ENCODE measurements at regions of chr9 and their contacts with region 1.

Region 1: GRCh38 chr9:14868772-14869583 is 41.2 kb downstream of the FREM1 start:
- DNase-seq: peak; percentile 97
- ATAC-seq: peak; percentile 95
- H3K4me3 ChIP-seq: peak overlapping the region; percentile 76 to 97 (median 88)
- H3K27ac ChIP-seq: peak overlapping the region; percentile 98
- H3K4me1 ChIP-seq: peaks cover 28% of the 10 kb centered on the region
- H3K27me3 ChIP-seq: no peaks in the 10 kb centered on the region; a peak in 3 of 5 replicates
- CTCF ChIP-seq: no peak
- EP300 ChIP-seq: peak; percentile 70 to 88; a peak in 3 of 4 replicates
- POLR2A ChIP-seq: peak; percentile 60 to 76
- RAD21 ChIP-seq: no peak

Region 2: GRCh38 chr9:14806941-14807520 is 61.9 kb before region 1 on chr9:
- CTCF ChIA-PET with region 1: no interaction called
- POLR2A ChIA-PET with region 1: no interaction called
- in situ Hi-C with region 1: no loop called
- intact Hi-C with region 1: loop called (anchors 10 kb)
- DNase-seq: no peak
- ATAC-seq: no peak
- H3K4me3 ChIP-seq: no peak overlapping the region
- H3K27ac ChIP-seq: no peak overlapping the region
- H3K4me1 ChIP-seq: no peaks in the 10 kb centered on the region
- H3K27me3 ChIP-seq: no peaks in the 10 kb centered on the region
- CTCF ChIP-seq: no peak
- EP300 ChIP-seq: no peak
- POLR2A ChIP-seq: no peak
- RAD21 ChIP-seq: no peak

Region 3: GRCh38 chr9:14909961-14910805 is 41.2 kb after region 1 on chr9 and contains the start of gene FREM1:
- CTCF ChIA-PET with region 1: no interaction called
- POLR2A ChIA-PET with region 1: interaction called, 8 read pairs
- in situ Hi-C with region 1: no loop called
- intact Hi-C with region 1: loop called (anchors 1 kb)
- DNase-seq: peak; percentile 55
- ATAC-seq: peak; percentile 94
- H3K4me3 ChIP-seq: peak within 1 kb of the TSS; percentile 1 to 66 (median 63); a peak in 4 of 6 replicates
- H3K27ac ChIP-seq: peak within 1 kb of the TSS; percentile 61
- H3K4me1 ChIP-seq: peaks cover 84% of the 10 kb centered on the region
- H3K27me3 ChIP-seq: no peaks in the 10 kb centered on the region; a peak in 1 of 5 replicates
- CTCF ChIP-seq: 0 out of 2 replicates have a peak, but pooled peaks have one; percentile 23
- EP300 ChIP-seq: peak in 1 of 2 experiments; percentile 18; a peak in 1 of 4 replicates
- POLR2A ChIP-seq: no peak
- RAD21 ChIP-seq: no peak
- total RNA-seq, gene FREM1: 33.6 and 64.3 TPM in 2 replicates

Region 4: GRCh38 chr9:14961372-14962068 is 92.5 kb after region 1 on chr9:
- CTCF ChIA-PET with region 1: no interaction called
- POLR2A ChIA-PET with region 1: interaction called, 12 read pairs
- in situ Hi-C with region 1: loop called (anchors 5 kb)
- intact Hi-C with region 1: loop called (anchors 1 kb)
- DNase-seq: peak; percentile 99
- ATAC-seq: peak; percentile 100
- H3K4me3 ChIP-seq: peak overlapping the region; percentile 58 to 76 (median 72)
- H3K27ac ChIP-seq: peak overlapping the region; percentile 100
- H3K4me1 ChIP-seq: peaks cover 40% of the 10 kb centered on the region
- H3K27me3 ChIP-seq: no peaks in the 10 kb centered on the region; a peak in 1 of 5 replicates
- CTCF ChIP-seq: peak; percentile 50
- EP300 ChIP-seq: no peak; a peak in 1 of 4 replicates
- POLR2A ChIP-seq: peak; percentile 86 to 89
- RAD21 ChIP-seq: no peak; the same call in 1 of the 2 replicates

Region 5: DNA sequence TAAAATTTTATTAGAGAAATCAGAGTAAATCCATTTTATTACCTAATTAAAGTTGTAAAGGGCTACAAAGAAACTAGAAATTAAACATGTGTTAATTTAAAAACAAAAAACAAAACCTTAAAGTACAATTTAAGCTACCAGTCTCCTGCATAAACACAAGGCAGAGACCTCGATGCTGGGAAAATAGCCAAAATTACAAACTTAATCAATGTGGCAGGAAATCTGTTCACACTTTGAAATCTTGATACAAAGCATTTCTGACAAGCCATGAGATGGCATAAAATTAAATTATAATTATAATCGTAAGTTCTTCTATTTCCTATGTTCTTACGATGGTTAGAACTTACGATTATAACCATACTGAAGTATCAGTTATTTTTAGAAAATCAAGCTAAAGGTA is 199.3 kb after region 1 on chr9:
- CTCF ChIA-PET with region 1: no interaction called
- POLR2A ChIA-PET with region 1: no interaction called
- in situ Hi-C with region 1: no loop called
- intact Hi-C with region 1: no loop called
- DNase-seq: no peak
- ATAC-seq: no peak
- H3K4me3 ChIP-seq: no peak overlapping the region
- H3K27ac ChIP-seq: no peak overlapping the region
- H3K4me1 ChIP-seq: peaks cover 10% of the 10 kb centered on the region
- H3K27me3 ChIP-seq: peaks cover 0 to 5% of the 10 kb centered on the region in 2 experiments; a peak in 2 of 5 replicates
- CTCF ChIP-seq: no peak
- EP300 ChIP-seq: no peak
- POLR2A ChIP-seq: no peak
- RAD21 ChIP-seq: no peak

Region 6: DNA sequence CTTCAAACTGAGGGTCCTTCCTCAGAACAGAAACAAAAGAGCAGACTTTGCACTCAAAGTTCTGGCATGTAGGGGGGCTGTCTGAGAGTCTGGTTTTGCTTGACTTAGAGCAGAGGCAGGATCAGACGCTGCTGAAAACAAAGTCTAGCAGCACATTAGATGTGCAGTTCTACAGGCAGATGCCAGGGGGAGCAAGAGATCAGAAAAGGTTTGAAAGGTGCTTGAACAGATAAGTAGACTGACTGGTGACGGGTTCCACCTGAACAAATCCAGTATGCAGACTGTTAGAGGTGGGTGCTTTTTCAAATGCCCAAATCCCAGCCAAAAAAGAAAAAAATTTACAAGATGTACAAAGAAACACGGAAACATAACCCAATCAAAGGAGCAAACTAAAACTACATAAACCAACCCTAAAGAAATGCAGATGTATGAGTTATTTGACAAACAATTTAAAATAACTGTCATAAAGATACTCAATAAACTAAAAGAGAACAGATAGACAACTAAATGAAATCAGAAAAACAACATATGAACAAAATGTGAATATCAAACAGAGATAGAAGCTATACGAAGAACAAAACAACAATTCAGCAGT is 235.9 kb after region 1 on chr9:
- CTCF ChIA-PET with region 1: no interaction called
- POLR2A ChIA-PET with region 1: no interaction called
- in situ Hi-C with region 1: no loop called
- intact Hi-C with region 1: loop called (anchors 10 kb)
- DNase-seq: peak; percentile 47
- ATAC-seq: peak; percentile 81
- H3K4me3 ChIP-seq: no peak overlapping the region
- H3K27ac ChIP-seq: no peak overlapping the region
- H3K4me1 ChIP-seq: peaks cover 13% of the 10 kb centered on the region
- H3K27me3 ChIP-seq: no peaks in the 10 kb centered on the region
- CTCF ChIP-seq: peak; percentile 81
- EP300 ChIP-seq: no peak
- POLR2A ChIP-seq: no peak
- RAD21 ChIP-seq: no peak; the same call in 1 of the 2 replicates

Region 7: DNA sequence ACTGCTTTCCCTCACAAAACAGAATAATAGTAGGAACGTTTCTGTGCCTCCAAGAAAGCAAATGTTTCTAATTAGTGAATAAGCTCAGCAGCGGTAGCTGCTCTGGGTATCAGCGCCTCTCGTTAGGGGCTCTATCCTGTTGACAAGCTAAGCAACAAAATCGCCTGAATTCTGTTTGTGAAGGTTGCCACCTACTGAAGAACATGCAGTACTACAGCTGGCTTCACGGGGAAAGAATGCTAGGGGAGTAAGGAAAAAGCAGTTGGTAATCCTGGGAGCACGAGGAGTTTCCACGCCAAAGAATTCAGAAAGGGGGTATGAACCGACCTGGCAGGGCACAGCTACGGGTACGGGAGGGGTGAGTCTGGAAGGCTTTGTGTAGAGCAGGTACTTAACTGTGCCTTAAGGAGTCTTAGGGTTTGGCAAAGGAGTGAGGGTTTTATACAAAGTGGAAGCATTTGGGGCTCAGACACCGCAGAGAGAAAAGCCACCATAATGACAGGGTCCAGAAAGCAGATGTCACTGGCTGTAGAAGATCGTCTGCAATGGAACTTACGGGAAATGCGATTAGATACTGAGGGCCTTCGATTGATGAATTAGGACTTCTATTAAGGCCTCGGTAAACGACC is 266.3 kb after region 1 on chr9:
- CTCF ChIA-PET with region 1: no interaction called
- POLR2A ChIA-PET with region 1: no interaction called
- in situ Hi-C with region 1: no loop called
- intact Hi-C with region 1: loop called (anchors 5 kb)
- DNase-seq: peak; percentile 73
- ATAC-seq: peak; percentile 93
- H3K4me3 ChIP-seq: peak overlapping the region in 2 of 3 experiments; percentile 36 to 60; a peak in 4 of 6 replicates
- H3K27ac ChIP-seq: no peak overlapping the region
- H3K4me1 ChIP-seq: peaks cover 25% of the 10 kb centered on the region; the same call in 1 of the 2 replicates
- H3K27me3 ChIP-seq: peaks cover 0 to 4% of the 10 kb centered on the region in 2 experiments; a peak in 1 of 5 replicates
- CTCF ChIP-seq: peak; percentile 92
- EP300 ChIP-seq: no peak
- POLR2A ChIP-seq: no peak
- RAD21 ChIP-seq: peak; percentile 83

Measured in HepG2 (cell line).